IMR-90 (cell line): ENCODE measurements at regions of chr9 and their contacts with region 1.

Region 1: DNA sequence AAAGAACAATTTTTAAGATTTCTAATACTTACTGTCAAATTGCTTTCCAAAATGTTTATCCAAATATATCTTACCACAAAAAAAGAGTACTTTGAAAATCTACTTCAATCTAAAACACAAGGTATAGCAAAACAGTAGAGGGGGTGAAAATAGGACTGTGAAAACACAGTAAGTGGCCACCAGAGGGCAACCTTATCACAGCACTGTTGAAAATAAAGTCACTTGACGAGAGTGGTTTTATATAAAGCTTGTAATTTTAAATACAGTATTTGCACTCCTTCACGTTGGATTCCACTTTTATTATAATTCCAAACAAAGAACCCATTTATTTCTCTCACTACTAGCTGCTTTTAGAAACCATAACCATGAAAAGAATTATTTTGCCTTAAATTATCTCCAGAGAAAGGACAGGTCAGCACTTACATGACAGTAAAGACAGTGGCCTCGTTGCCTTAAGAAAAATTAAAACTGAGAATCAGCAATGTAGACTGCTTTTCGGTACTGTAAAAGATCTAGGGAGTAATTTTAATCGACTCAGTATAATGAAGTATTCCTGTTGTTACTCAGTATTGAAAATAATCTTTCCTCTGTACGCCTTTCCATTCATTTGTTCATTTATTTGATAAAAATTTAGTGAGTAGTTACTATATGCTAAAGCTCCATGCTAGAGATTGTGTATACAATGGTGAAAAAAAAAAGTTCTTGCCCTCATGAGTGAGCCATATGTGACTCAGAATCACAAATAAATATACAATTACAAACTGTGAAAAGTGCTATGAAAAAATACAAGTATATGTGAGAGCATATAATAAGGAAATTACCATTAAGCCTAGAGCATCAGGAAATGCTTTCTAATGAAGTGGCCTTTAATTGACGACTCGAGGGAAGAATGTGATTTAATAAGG is 40.0 kb upstream of the CDK5RAP2 start:
- DNase-seq: peak; percentile 74
- ATAC-seq: peak; percentile 79
- H3K4me3 ChIP-seq: no peak overlapping the region
- H3K27ac ChIP-seq: no peak overlapping the region; the same call in 1 of the 2 replicates
- H3K4me1 ChIP-seq: peaks cover 11% of the 10 kb centered on the region
- H3K27me3 ChIP-seq: no peaks in the 10 kb centered on the region
- CTCF ChIP-seq: peak; percentile 83
- POLR2A ChIP-seq: no peak
- RAD21 ChIP-seq: peak; percentile 85

Region 2: DNA sequence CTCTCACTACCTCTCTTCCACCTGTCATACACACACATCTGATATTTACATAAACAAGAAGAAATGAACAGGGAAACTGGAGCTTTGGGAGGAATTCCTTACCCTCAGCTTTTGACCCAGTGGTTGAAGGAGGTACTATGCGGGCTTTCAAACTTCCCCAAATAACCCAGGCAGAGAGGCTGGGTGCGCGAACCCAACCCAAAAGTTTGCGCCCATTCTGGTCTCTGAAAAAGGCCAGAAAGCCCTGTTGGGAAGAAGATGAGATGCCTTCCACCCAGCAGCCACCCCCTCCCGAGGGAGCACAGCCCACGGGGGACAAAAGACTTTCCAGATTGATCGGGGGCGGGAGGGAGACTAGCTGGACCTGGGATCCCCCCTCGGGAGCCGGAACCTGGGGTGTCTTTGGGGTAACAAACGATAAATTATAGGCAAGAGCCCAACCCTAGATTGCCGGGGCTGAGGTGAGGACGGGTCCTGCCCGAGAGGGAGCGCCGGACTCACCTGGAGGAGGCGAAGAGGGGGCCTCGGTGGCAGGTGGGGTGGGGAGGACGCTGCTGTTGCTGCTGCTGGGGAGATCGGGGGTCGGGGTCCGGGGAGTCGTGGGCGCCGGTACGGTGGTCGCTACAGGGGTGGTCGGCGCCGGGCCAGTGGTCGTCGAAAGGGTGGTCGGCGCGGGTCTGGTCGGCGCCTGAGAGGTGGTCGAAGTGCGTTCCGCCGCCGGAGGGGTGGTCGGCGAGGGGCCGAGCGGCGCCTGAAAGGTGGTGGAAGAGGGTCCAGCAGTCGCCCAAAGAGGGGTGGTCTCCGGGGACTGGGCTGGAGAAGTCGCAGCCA is 93.5 kb after region 1 on chr9:
- CTCF ChIA-PET with region 1: interaction called, 6 read pairs
- POLR2A ChIA-PET with region 1: no interaction called
- dilution Hi-C with region 1: no loop called
- in situ Hi-C with region 1: no loop called
- intact Hi-C with region 1: loop called (anchors 2 kb)
- DNase-seq: no peak
- ATAC-seq: no peak
- H3K4me3 ChIP-seq: peak overlapping the region; percentile 75
- H3K27ac ChIP-seq: peak overlapping the region; percentile 34; the same call in 1 of the 2 replicates
- H3K4me1 ChIP-seq: peaks cover 13% of the 10 kb centered on the region
- H3K27me3 ChIP-seq: no peaks in the 10 kb centered on the region
- CTCF ChIP-seq: no peak
- POLR2A ChIP-seq: no peak
- RAD21 ChIP-seq: no peak

Region 3: DNA sequence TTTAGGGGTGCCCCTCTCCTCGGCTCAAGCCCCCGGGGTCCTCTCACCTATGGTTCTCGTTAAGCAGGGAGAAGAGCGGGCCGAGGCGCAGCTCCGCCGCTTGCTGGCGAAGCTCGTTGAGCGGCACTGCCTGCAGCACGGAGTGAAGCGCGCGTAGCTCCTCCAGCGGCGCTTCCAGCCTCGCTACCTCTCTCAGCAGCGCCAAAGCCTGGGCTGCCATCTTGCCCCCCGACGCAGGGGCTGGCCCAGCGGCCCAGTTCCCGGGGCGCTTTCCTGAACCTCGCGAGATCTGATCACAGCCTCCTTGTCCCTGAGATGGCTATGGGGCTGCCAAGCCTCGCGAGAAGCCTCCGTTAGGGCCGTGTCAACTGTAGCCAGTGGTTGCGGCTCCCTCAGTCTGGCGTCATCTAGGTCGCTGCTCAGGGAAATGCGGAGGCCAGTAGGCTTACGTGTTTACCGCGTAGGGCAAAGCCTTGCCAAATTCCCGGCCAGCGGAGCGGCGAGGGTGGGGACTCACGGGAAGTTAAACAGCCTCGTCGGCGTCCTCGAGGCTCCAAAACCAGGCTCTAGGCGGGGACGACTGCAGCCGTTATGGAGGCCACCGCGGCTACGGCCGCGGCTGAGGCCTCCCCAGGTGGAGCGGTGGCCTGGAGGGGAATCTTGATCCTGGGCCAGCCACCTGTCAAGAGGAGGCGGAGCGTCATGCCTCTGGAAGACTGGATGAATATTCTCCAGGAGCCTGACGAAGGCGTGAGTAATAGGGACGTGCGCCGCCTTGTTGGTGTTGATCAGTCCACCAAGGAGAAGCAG is 222.9 kb after region 1 on chr9 and contains the start of gene PSMD5:
- CTCF ChIA-PET with region 1: no interaction called
- POLR2A ChIA-PET with region 1: no interaction called
- dilution Hi-C with region 1: no loop called
- in situ Hi-C with region 1: no loop called
- intact Hi-C with region 1: loop called (anchors 10 kb)
- DNase-seq: peak; percentile 100
- ATAC-seq: peak; percentile 99
- H3K4me3 ChIP-seq: peak within 1 kb of the TSS; percentile 91
- H3K27ac ChIP-seq: peak within 1 kb of the TSS; percentile 91
- H3K4me1 ChIP-seq: peaks cover 7% of the 10 kb centered on the region
- H3K27me3 ChIP-seq: no peaks in the 10 kb centered on the region
- CTCF ChIP-seq: 0 out of 2 replicates have a peak, but pooled peaks have one; percentile 3
- POLR2A ChIP-seq: peak; percentile 92
- RAD21 ChIP-seq: no peak
- total RNA-seq, gene PSMD5: 25.6 and 38.9 TPM in 2 replicates

Region 4: DNA sequence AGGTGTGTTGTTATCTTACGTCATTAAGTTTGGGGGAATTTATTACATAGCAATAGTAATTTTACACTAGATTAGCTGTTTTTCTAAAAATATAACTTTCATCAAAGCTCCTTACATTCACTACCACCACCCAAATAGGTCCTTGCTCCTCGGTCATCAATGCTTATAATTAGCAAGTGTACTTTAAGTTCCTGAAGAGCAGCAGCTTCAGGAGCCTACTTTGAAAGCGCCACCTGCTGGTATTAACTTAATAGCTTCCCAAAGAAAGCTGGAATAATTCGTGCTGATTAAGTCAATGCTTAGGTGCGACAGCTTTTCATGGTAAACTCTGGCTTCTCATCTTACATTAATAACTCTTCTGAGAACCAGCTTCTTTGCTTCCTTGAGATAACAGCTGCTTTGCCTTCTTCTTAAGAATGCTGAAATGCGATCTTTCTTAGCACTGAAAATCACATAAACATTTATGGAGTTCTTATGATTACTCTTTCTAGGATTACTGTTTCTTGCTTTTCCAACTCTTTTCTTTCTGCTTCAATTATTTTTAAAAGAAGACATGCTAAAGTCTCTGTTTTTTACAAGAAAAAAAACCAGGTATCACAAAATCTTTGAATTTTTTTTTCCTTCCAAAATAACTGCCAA is 440.1 kb after region 1 on chr9:
- CTCF ChIA-PET with region 1: no interaction called
- POLR2A ChIA-PET with region 1: no interaction called
- dilution Hi-C with region 1: no loop called
- in situ Hi-C with region 1: loop called (anchors 25 kb)
- intact Hi-C with region 1: loop called (anchors 5 kb)
- DNase-seq: peak; percentile 84
- ATAC-seq: peak; percentile 80
- H3K4me3 ChIP-seq: no peak overlapping the region
- H3K27ac ChIP-seq: no peak overlapping the region
- H3K4me1 ChIP-seq: peaks cover 1% of the 10 kb centered on the region; the same call in 1 of the 2 replicates
- H3K27me3 ChIP-seq: no peaks in the 10 kb centered on the region
- CTCF ChIP-seq: peak; percentile 74
- POLR2A ChIP-seq: no peak
- RAD21 ChIP-seq: peak; percentile 65